CD4-positive, alpha-beta memory T cell (primary cell): ENCODE measurements at regions of chr20 and their contacts with region 1.

Region 1: DNA sequence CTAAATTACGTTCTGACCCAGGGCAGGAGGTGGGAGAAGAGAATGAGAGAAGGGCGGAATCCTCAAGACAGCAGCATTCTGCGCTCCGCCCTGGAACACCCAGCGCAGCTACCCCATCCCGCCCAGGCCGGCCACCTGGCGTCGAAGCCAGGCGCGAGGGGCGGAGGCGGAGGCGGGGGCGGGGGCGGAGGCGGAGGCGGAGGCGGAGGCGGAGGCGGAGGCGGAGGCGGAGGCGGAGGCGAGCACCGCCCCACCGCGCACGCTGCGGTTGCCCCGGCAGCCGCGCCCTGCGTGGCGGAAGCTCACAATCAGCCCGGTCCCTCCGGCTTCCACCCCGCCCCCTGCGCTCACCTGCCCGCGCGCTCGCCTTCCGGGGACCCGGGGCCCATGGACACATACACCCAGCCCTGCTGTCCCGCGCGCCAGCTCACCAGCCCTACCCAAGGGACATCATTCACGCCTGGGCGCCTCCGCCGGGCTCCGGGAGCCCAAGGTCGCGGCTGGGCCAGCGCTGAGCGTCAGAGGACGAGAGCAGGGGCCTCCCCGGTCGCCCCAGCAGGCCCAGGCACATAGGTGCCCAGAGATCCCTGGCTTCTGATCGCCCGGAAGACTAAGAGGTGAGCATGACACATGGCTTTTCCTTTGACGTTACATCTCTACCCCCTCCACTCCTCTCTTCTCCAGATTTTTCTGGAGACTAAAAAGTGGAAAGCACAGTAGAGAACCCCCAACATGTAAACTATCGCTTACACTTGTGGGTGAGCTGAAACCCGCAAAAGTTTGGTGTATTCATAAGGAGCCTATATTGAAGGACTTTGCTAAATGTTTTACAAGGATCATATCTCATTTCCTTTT is at the start of gene ANKEF1:
- DNase-seq: peak; percentile 79 to 88 (median 86)
- H3K4me3 ChIP-seq: peak within 1 kb of the TSS; percentile 44 to 70
- H3K4me3 Mint-ChIP-seq: peak within 1 kb of the TSS; percentile 67 to 85 (median 78)
- H3K27ac ChIP-seq: peak within 1 kb of the TSS; percentile 40
- H3K27ac Mint-ChIP-seq: peak within 1 kb of the TSS; percentile 75 to 92 (median 85)
- H3K4me1 ChIP-seq: peaks cover 9% of the 10 kb centered on the region
- H3K4me1 Mint-ChIP-seq: peaks cover 11 to 23% (median 12%) of the 10 kb centered on the region in 4 donors
- H3K27me3 ChIP-seq: no peaks in the 10 kb centered on the region
- H3K27me3 Mint-ChIP-seq: peaks cover 2 to 10% of the 10 kb centered on the region in 2 donors
- total RNA-seq, gene ANKEF1: 5.0 to 5.1 TPM

Region 2: DNA sequence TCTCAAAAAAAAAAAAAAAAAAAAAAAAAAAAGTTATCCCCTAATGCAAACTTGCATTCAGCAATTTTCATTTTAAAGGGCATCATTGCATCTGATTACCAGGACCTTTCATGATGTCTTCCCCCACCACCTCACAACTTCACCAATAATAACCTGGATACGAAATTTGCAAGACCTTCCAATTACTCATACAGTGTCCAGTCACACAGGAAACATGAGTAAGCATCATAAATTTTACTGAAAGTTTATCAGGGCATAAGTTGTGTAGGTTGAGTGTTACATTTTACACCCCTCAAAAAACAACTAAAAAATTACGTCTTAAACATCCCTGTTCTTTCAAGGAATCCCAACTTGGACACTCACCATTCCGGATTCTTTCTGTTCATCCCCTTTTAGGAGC is 79.3 kb before region 1 on chr20:
- CTCF ChIA-PET with region 1: no interaction called
- POLR2A ChIA-PET with region 1: no interaction called
- intact Hi-C with region 1: no loop called
- DNase-seq: no peak
- H3K4me3 ChIP-seq: no peak overlapping the region
- H3K4me3 Mint-ChIP-seq: no peak overlapping the region
- H3K27ac ChIP-seq: no peak overlapping the region
- H3K27ac Mint-ChIP-seq: no peak overlapping the region
- H3K4me1 ChIP-seq: no peaks in the 10 kb centered on the region
- H3K4me1 Mint-ChIP-seq: no peaks in the 10 kb centered on the region
- H3K27me3 ChIP-seq: no peaks in the 10 kb centered on the region
- H3K27me3 Mint-ChIP-seq: peaks cover 5 to 10% of the 10 kb centered on the region in 2 donors

Region 3: GRCh38 chr20:10209091-10209490 is 174.1 kb after region 1 on chr20:
- CTCF ChIA-PET with region 1: no interaction called
- POLR2A ChIA-PET with region 1: no interaction called
- intact Hi-C with region 1: no loop called
- DNase-seq: no peak
- H3K4me3 ChIP-seq: no peak overlapping the region
- H3K4me3 Mint-ChIP-seq: no peak overlapping the region
- H3K27ac ChIP-seq: no peak overlapping the region
- H3K27ac Mint-ChIP-seq: no peak overlapping the region
- H3K4me1 ChIP-seq: no peaks in the 10 kb centered on the region
- H3K4me1 Mint-ChIP-seq: no peaks in the 10 kb centered on the region
- H3K27me3 ChIP-seq: no peaks in the 10 kb centered on the region
- H3K27me3 Mint-ChIP-seq: peaks cover 4% of the 10 kb centered on the region in 2 donors

Region 4: DNA sequence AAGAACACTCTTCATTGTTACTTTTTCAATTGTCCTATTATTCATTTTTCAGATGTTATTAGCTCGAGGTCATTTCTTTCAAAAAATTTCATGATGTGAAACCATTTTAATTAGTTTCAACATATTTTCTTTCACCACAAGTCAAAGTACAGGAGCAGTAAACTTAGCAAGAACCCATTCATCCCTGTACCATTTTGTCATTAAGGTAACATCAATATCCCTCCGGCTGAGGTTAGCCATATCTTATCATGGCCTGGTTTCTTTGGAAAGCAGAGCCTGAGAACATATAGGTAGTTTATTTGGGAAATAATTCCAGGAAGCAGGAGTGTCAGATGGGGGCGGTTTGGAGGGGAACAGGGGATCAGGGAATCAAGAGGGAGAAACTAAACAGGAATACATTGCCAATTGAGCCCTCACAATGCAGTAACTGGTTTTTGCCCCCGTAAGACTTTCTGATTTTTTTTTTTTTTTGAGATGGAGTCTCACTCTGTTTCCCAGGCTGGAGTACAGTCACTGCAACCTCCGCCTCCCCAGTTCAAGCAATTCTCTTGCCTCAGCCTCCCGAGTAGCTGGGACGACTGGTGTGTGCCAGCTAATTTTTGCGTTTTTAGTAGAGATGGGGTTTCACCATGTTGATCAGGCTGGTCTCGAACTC is 315.4 kb after region 1 on chr20:
- CTCF ChIA-PET with region 1: no interaction called
- POLR2A ChIA-PET with region 1: no interaction called
- intact Hi-C with region 1: loop called (anchors 2 kb)
- DNase-seq: no peak
- H3K4me3 ChIP-seq: no peak overlapping the region
- H3K4me3 Mint-ChIP-seq: peak overlapping the region; percentile 41 to 82 (median 74)
- H3K27ac ChIP-seq: no peak overlapping the region
- H3K27ac Mint-ChIP-seq: peak overlapping the region; percentile 49 to 93 (median 88)
- H3K4me1 ChIP-seq: peaks cover 27% of the 10 kb centered on the region
- H3K4me1 Mint-ChIP-seq: peaks cover 12 to 30% (median 25%) of the 10 kb centered on the region in 4 donors
- H3K27me3 ChIP-seq: no peaks in the 10 kb centered on the region
- H3K27me3 Mint-ChIP-seq: no peaks in the 10 kb centered on the region